K562 (cell line): ENCODE measurements at regions of chr1 and their contacts with region 1.

Region 1: GRCh38 chr1:182279724-182280503 is 111.7 kb downstream of the GLUL start:
- DNase-seq: no peak
- ATAC-seq: peak; percentile 24; the same call in 2 of the 3 replicates
- H3K4me3 ChIP-seq: no peak overlapping the region
- H3K27ac ChIP-seq: no peak overlapping the region
- H3K4me1 ChIP-seq: peaks cover 3% of the 10 kb centered on the region in 2 experiments; a peak in 3 of 5 replicates
- H3K27me3 ChIP-seq: no peaks in the 10 kb centered on the region
- CTCF ChIP-seq: no peak
- EP300 ChIP-seq: no peak
- POLR2A ChIP-seq: no peak
- RAD21 ChIP-seq: no peak

Region 2: DNA sequence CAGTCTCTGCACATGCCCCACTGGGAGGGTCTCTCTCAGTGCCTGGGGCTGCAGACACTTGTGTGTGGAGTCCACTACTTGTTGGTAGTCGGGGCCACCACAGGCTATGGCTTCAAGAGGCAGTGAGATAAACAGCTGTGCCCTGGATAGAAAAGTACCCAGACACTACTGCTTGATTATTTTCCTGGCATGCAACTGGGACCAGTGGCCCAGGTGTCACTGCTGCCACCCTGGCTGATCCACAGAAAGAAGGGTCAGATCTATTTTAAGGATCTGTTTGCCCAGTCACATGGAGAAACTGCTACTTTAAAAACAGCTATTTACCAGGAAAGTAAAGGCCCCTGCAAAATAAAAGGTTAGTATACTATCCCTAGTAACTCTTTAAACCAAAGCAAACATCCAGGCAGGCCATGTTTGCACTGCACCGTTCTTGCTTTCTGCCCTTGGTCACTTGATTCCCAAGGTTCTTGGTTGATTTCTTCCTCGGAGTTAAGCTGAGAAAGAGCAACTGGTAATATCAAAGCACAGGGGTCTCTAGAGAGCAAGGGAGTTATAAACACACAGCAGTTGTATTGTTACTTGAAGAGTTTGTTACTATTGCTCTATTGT is 11.8 kb after region 1 on chr1:
- CTCF ChIA-PET with region 1: no interaction called
- POLR2A ChIA-PET with region 1: interaction called, 25 read pairs
- in situ Hi-C with region 1: no loop called
- intact Hi-C with region 1: no loop called
- DNase-seq: no peak
- ATAC-seq: no peak
- H3K4me3 ChIP-seq: no peak overlapping the region
- H3K27ac ChIP-seq: peak overlapping the region; percentile 33; the same call in 1 of the 3 replicates
- H3K4me1 ChIP-seq: peaks cover 13 to 49% of the 10 kb centered on the region in 2 experiments
- H3K27me3 ChIP-seq: no peaks in the 10 kb centered on the region
- CTCF ChIP-seq: no peak
- EP300 ChIP-seq: no peak
- POLR2A ChIP-seq: no peak
- RAD21 ChIP-seq: no peak